Activated CD8-positive, alpha-beta T cell treated with anti-CD3 and anti-CD28 coated beads for 36 hours (primary cell): ENCODE measurements at regions of chr6 and their contacts with region 1.

Region 1: DNA sequence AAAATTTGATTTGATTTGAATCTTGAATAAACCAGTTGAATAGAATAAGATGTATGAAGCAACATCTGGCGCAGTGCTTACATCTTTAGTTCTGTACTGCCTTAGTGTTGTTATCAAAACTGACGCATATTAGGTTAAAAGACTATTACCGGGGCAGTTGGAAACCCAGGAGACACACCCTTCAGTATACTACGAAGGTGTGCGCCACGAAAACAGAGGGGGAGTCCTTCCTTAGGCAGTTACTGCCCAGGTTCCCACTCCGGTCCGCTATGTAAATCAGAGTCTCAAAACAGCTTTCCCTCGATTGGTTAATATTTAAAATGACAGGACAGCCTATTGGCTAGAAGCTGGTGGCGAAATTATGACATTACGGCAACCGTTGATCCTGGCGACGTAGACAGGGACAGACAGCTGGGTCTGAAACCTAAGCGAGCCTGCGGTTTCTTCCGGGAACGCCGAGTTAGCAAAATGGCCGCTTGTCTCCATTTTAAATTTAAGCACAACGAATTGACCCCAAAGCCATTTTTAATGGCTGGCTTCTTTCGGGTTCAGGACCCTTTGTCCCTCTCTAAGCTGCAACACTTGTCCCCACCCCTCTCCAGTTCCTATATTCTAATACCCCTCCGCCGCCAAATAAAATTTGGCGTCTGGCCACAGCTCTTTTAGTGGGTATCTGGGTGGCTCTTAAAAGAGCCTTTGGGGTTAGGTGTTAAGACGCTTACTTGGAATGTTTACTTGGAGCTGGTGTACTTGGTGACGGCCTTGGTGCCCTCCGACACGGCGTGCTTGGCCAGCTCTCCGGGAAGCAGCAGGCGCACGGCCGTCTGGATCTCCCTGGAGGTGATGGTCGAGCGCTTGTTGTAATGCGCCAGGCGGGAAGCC is 35.8 kb downstream of the HFE start:
- DNase-seq: peak; percentile 98
- ATAC-seq: peak; percentile 60
- H3K4me3 Mint-ChIP-seq: peak overlapping the region; percentile 84
- H3K27ac Mint-ChIP-seq: peak overlapping the region; percentile 98
- H3K4me1 Mint-ChIP-seq: peaks cover 27% of the 10 kb centered on the region
- H3K27me3 Mint-ChIP-seq: no peaks in the 10 kb centered on the region
- CTCF ChIP-seq: no peak

Region 2: DNA sequence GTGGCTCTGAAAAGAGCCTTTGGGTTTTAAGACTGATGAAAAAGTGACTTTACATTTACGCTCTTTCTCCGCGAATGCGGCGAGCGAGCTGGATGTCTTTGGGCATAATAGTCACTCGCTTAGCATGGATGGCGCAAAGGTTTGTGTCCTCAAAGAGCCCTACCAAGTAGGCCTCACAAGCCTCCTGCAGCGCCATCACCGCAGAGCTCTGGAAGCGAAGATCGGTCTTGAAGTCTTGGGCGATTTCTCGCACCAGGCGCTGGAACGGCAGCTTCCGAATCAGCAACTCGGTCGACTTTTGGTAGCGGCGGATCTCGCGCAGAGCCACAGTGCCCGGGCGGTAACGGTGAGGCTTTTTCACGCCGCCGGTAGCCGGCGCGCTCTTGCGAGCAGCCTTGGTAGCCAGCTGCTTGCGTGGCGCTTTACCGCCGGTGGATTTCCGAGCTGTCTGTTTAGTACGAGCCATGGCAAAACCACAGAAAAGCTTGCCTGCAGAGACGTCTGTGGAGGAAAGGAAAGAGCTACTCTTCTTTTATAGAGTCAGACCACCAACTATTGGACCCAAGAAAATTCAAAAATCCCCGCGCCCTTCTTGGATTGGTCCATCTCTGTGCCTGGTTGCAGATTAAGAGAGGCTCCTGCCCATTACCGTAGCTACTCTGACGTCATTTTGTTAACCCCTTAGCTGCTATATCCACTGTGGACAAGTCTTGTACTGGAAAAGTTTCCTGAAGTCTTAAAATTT is 91.3 kb before region 1 on chr6:
- CTCF ChIA-PET with region 1: interaction called, 3 read pairs
- POLR2A ChIA-PET with region 1: interaction called, 73 read pairs
- intact Hi-C with region 1: loop called (anchors 2 kb)
- DNase-seq: peak; percentile 95
- ATAC-seq: peak; percentile 66
- H3K4me3 Mint-ChIP-seq: peak overlapping the region; percentile 91
- H3K27ac Mint-ChIP-seq: peak overlapping the region; percentile 98
- H3K4me1 Mint-ChIP-seq: peaks cover 50% of the 10 kb centered on the region
- H3K27me3 Mint-ChIP-seq: peaks cover 3% of the 10 kb centered on the region
- CTCF ChIP-seq: no peak

Region 3: GRCh38 chr6:26065952-26066380 is 57.1 kb before region 1 on chr6:
- CTCF ChIA-PET with region 1: interaction called, 4 read pairs
- POLR2A ChIA-PET with region 1: interaction called, 33 read pairs
- intact Hi-C with region 1: no loop called
- DNase-seq: peak; percentile 73
- ATAC-seq: peak; percentile 95
- H3K4me3 Mint-ChIP-seq: no peak overlapping the region
- H3K27ac Mint-ChIP-seq: no peak overlapping the region
- H3K4me1 Mint-ChIP-seq: no peaks in the 10 kb centered on the region
- H3K27me3 Mint-ChIP-seq: no peaks in the 10 kb centered on the region
- CTCF ChIP-seq: peak; percentile 79

Region 4: DNA sequence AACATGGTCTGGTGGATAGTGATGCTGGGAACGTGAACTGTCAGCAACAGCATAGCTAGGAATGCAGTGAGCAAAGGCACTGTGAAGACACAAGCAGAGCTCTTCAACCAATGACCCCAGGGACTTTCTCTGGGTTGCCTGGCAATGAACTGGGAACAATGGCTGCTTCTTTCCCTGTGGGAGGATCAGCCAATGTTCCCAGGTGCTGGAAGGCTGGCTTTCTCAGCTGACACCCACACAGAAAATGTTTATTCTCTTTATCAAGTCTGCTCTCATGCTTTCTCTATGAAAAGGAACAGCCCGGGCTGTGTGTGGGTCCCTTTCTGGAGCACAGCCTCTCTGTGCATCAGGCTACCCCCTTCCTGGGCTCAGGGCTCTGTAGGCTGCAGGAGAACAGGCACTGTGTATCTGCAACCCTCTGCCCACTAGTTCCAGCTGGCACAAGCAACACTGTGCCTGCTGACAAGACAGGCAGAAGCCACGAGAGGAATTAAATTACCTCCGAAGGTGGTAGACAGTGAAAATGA is 18.4 kb after region 1 on chr6:
- CTCF ChIA-PET with region 1: interaction called, 4 read pairs
- POLR2A ChIA-PET with region 1: interaction called, 46 read pairs
- intact Hi-C with region 1: no loop called
- DNase-seq: no peak
- ATAC-seq: no peak
- H3K4me3 Mint-ChIP-seq: no peak overlapping the region
- H3K27ac Mint-ChIP-seq: no peak overlapping the region
- H3K4me1 Mint-ChIP-seq: no peaks in the 10 kb centered on the region
- H3K27me3 Mint-ChIP-seq: no peaks in the 10 kb centered on the region
- CTCF ChIP-seq: no peak

Region 5: GRCh38 chr6:26196846-26197648 is 74.0 kb after region 1 on chr6:
- CTCF ChIA-PET with region 1: interaction called, 4 read pairs
- POLR2A ChIA-PET with region 1: interaction called, 259 read pairs
- intact Hi-C with region 1: loop called (anchors 10 kb)
- DNase-seq: peak; percentile 86
- ATAC-seq: peak; percentile 48
- H3K4me3 Mint-ChIP-seq: peak overlapping the region; percentile 96
- H3K27ac Mint-ChIP-seq: peak overlapping the region; percentile 96
- H3K4me1 Mint-ChIP-seq: peaks cover 24% of the 10 kb centered on the region
- H3K27me3 Mint-ChIP-seq: no peaks in the 10 kb centered on the region
- CTCF ChIP-seq: no peak

Region 6: DNA sequence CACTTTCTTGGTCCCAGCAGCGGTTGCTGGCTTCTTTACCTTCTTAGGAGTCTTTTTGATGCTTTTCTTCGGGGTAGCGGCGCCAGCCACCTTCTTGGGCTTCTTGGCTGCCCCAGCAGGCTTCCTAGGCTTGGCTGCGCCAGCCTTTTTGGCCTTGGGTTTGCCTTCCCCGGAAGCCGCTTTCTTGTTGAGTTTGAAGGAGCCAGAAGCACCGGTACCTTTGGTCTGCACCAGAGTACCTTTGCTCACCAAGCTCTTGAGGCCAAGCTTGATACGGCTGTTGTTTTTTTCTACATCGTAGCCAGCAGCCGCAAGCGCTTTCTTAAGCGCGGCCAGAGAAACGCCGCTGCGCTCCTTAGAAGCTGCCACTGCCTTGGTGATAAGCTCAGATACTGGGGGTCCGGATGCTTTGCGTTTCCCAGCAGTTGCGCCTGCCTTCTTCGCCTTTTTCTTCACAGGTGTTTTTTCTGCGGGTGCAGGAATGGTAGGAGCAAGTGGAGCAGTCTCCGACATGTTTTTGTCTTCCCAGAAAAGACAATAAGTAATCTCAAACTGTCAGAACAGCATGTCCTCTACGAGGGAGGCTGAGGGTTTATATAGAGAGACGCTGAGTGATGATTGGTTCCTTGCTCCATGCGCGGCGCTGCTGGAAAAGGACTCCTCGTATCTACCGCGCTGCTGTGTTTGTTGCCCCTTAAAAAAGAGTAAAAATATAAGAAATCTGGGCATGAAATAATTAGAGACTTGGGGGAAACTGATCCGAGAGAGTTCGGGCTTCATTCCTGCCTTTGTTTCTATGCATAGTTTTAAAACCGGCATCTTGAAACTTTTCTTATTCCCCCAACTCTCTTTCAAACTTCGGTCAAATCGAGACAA is 111.6 kb after region 1 on chr6:
- CTCF ChIA-PET with region 1: no interaction called
- POLR2A ChIA-PET with region 1: interaction called, 59 read pairs
- intact Hi-C with region 1: no loop called
- DNase-seq: peak; percentile 86
- ATAC-seq: peak; percentile 65
- H3K4me3 Mint-ChIP-seq: peak overlapping the region; percentile 75
- H3K27ac Mint-ChIP-seq: peak overlapping the region; percentile 99
- H3K4me1 Mint-ChIP-seq: peaks cover 24% of the 10 kb centered on the region
- H3K27me3 Mint-ChIP-seq: peaks cover 5% of the 10 kb centered on the region
- CTCF ChIP-seq: no peak

Region 7: GRCh38 chr6:26537846-26538571 is 415.0 kb after region 1 on chr6 and contains the start of gene HMGN4:
- CTCF ChIA-PET with region 1: no interaction called
- POLR2A ChIA-PET with region 1: no interaction called
- intact Hi-C with region 1: no loop called
- DNase-seq: peak; percentile 85
- ATAC-seq: peak; percentile 57
- H3K4me3 Mint-ChIP-seq: peak within 1 kb of the TSS; percentile 95
- H3K27ac Mint-ChIP-seq: peak within 1 kb of the TSS; percentile 99
- H3K4me1 Mint-ChIP-seq: peaks cover 49% of the 10 kb centered on the region
- H3K27me3 Mint-ChIP-seq: peaks cover 1% of the 10 kb centered on the region
- CTCF ChIP-seq: no peak
- total RNA-seq, gene HMGN4: 80.2 to 83.3 TPM